ENCODE measurements at regions of chr13 and their contacts with region 1.

Region 1: GRCh38 chr13:58804832-58805231 is 1173.3 kb downstream of the PCDH17 start:
- DNase-seq: no peak
- H3K4me3 ChIP-seq: no peak overlapping the region
- H3K27ac ChIP-seq: no peak overlapping the region
- H3K4me1 ChIP-seq: no peaks in the 10 kb centered on the region
- H3K27me3 ChIP-seq: no peaks in the 10 kb centered on the region
- CTCF ChIP-seq: no peak
- POLR2A ChIP-seq: no peak

Region 2: GRCh38 chr13:57787058-57787791 is 1017.6 kb before region 1 on chr13:
- intact Hi-C with region 1: loop called (anchors 10 kb)
- DNase-seq: no peak
- H3K4me3 ChIP-seq: no peak overlapping the region
- H3K27ac ChIP-seq: no peak overlapping the region
- H3K4me1 ChIP-seq: no peaks in the 10 kb centered on the region
- H3K27me3 ChIP-seq: no peaks in the 10 kb centered on the region
- CTCF ChIP-seq: no peak
- POLR2A ChIP-seq: no peak

Region 3: GRCh38 chr13:58680115-58680514 is 124.7 kb before region 1 on chr13:
- intact Hi-C with region 1: no loop called
- DNase-seq: no peak
- H3K4me3 ChIP-seq: no peak overlapping the region
- H3K27ac ChIP-seq: no peak overlapping the region
- H3K4me1 ChIP-seq: no peaks in the 10 kb centered on the region
- H3K27me3 ChIP-seq: no peaks in the 10 kb centered on the region
- CTCF ChIP-seq: no peak
- POLR2A ChIP-seq: no peak